PC-3 (cell line): ENCODE measurements at regions of chr2 and their contacts with region 1.

Region 1: DNA sequence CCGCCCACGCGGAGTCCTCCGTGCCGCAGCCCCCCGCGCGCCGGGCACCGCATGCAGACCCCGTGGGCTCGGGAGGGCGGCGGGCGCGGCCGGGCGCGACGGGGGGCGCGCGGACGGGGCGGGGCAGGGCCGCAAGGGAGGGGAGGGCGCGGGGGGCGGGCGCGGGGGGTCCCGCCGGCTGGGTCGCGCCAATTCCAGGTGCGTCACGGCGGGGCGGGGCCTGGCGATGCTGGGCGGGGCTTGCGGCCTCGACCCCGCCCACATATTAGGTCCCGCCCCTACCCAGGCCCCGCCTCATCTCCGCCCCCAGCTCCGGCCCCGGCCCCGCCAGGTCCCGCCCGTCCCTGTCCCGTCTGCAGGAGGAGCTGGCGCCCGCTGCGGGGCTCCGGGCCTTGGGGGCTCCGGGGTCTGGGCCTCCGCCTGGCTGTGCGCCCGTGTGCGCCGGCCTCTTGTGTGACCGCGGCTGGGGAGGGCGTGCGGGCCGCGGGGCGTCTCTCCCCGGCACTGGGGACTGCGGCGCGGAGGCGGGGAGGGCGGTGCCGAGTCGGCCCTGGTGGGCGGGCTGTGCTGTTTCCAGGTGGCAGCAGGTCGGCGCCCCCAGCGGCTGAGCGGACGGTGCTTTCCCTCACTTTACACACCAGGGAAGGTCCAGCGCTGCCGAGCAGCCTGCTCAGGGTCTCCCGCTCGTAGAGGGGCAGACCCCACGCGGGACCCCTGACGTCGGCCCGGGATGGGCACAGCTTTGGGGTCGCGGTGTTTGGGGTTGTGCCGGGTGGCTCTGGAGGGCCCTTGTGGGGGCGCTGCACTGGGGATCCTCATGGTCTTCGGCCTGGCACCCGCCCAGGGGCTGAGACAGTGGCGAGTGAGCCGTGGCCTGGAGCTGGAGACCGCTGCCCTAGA is 543 bp downstream of the ING5 start:
- DNase-seq: peak; percentile 73
- ATAC-seq: peak; percentile 74
- H3K4me3 ChIP-seq: peak overlapping the region; percentile 78
- H3K27ac ChIP-seq: peak overlapping the region; percentile 89; the same call in 1 of the 2 replicates
- H3K4me1 ChIP-seq: peaks cover 5% of the 10 kb centered on the region; the same call in 1 of the 2 replicates
- H3K27me3 ChIP-seq: no peaks in the 10 kb centered on the region
- CTCF ChIP-seq: peak; percentile 56

Region 2: GRCh38 chr2:241665727-241666440 is 36.5 kb before region 1 on chr2:
- CTCF ChIA-PET with region 1: no interaction called
- POLR2A ChIA-PET with region 1: no interaction called
- intact Hi-C with region 1: loop called (anchors 2 kb)
- DNase-seq: no peak
- ATAC-seq: no peak
- H3K4me3 ChIP-seq: no peak overlapping the region
- H3K27ac ChIP-seq: peak overlapping the region; percentile 69
- H3K4me1 ChIP-seq: peaks cover 16% of the 10 kb centered on the region
- H3K27me3 ChIP-seq: no peaks in the 10 kb centered on the region
- CTCF ChIP-seq: no peak

Region 3: DNA sequence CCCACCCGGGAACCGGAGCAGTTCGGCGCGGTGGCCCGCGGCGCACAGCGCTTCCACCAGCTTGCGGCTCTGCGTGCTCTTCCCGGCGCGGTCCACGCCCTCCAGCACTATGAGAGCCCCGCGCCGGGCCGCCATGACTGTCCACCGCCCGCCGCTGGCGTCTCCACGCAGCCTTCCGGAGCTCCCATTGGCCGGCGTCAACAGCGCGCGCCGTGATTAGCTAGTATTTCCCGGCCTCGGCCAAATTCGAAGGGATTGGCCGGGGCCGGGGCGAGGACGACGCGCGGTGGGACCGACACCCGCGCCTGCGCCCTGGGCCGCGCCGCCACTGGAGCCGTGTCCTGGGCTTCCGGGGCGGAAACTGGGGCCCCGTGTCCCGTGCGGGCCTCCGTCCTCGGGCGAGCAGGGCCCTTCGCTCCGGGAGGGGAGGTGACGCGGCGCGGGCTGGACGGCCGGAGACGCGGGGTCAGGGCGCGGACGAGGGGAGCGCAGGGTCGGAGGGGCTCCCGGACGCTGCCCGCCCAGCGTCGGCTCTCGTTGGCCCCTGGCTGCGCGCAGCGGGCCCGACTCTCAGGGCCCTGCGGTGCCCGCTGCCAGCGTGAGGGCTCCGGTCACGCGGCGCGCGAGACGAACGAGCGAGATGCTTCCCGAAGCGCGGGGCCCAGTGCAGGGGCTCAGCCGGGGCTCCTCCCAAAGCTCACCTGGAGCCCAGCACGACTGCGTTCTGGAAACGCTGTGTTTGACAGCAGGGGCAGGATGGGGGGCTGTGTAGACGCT is 15.5 kb before region 1 on chr2 and contains the start of gene DTYMK:
- CTCF ChIA-PET with region 1: no interaction called
- POLR2A ChIA-PET with region 1: interaction called, 4 read pairs
- intact Hi-C with region 1: loop called (anchors 2 kb)
- DNase-seq: peak; percentile 97
- ATAC-seq: peak; percentile 97
- H3K4me3 ChIP-seq: peak within 1 kb of the TSS; percentile 96
- H3K27ac ChIP-seq: peak within 1 kb of the TSS; percentile 80
- H3K4me1 ChIP-seq: peaks cover 16% of the 10 kb centered on the region
- H3K27me3 ChIP-seq: no peaks in the 10 kb centered on the region
- CTCF ChIP-seq: no peak
- total RNA-seq, gene DTYMK: 130 and 155 TPM in 2 replicates

Region 4: DNA sequence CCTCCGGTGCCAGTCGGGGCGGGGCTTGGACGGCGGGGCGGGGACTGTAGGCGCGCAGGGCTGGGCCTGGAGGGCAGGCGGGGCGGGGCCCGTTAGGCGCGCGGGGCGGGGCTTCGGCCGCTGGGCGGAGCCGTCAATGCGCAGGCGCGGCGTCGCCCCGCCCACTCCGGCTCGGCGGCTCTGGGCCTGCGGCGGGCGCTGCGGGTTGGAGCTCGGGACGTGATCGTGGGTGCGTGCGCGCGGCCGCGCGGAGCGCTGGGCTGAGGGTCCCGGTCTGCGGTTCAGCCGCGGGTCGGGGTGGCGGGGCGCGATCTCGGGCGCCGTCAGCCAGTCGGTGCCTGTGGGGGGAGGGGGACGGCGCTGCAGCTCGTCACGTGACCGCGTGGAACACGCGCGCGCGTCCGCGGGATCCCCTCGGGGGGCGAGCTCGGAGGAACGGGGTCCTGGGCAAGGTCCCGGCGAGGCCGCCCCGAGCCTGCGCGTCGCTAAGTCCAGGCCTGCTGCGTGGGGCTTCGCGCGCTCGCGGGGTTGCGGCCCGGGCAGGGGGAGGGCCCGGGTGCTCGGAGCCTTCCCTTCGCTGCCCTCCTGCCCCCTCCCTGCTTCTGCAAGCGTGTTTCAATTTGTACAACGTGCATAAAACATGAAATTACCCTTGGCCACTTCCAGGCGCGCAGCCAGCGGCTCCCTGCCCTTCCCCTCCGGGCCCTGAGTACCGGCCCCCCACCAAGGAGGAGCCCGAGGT is 32.3 kb after region 1 on chr2 and contains the start of gene D2HGDH:
- CTCF ChIA-PET with region 1: no interaction called
- POLR2A ChIA-PET with region 1: interaction called, 9 read pairs
- intact Hi-C with region 1: loop called (anchors 2 kb)
- DNase-seq: peak; percentile 86
- ATAC-seq: peak; percentile 87
- H3K4me3 ChIP-seq: peak within 1 kb of the TSS; percentile 78
- H3K27ac ChIP-seq: peak within 1 kb of the TSS; percentile 60
- H3K4me1 ChIP-seq: peaks cover 20% of the 10 kb centered on the region
- H3K27me3 ChIP-seq: no peaks in the 10 kb centered on the region
- CTCF ChIP-seq: no peak
- total RNA-seq, gene D2HGDH: 28.5 and 51.2 TPM in 2 replicates